ENCODE measurements at regions of chr11 and their contacts with region 1.

Region 1: GRCh38 chr11:45371251-45372115 is 85.3 kb upstream of the SYT13 start:
- DNase-seq: peak; percentile 73
- H3K27ac ChIP-seq: no peak overlapping the region
- CTCF ChIP-seq: peak; percentile 69

Region 2: GRCh38 chr11:45252134-45252855 is 119.2 kb before region 1 on chr11:
- CTCF ChIA-PET with region 1: no interaction called
- POLR2A ChIA-PET with region 1: no interaction called
- DNase-seq: peak; percentile 45
- H3K27ac ChIP-seq: no peak overlapping the region
- CTCF ChIP-seq: peak; percentile 32

Region 3: GRCh38 chr11:45655347-45655756 is 283.9 kb after region 1 on chr11:
- CTCF ChIA-PET with region 1: interaction called, 14 read pairs
- POLR2A ChIA-PET with region 1: no interaction called
- DNase-seq: peak; percentile 80
- H3K27ac ChIP-seq: no peak overlapping the region
- CTCF ChIP-seq: peak; percentile 95